Dendritic cell treated with granulocyte-macrophage colony-stimulating factor and Interleukin-4, amounts not matched to agents 40 ng/mL and 50 ng/mL, for 4 days (primary cell): ENCODE measurements at regions of chr4 and their contacts with region 1.

Region 1: DNA sequence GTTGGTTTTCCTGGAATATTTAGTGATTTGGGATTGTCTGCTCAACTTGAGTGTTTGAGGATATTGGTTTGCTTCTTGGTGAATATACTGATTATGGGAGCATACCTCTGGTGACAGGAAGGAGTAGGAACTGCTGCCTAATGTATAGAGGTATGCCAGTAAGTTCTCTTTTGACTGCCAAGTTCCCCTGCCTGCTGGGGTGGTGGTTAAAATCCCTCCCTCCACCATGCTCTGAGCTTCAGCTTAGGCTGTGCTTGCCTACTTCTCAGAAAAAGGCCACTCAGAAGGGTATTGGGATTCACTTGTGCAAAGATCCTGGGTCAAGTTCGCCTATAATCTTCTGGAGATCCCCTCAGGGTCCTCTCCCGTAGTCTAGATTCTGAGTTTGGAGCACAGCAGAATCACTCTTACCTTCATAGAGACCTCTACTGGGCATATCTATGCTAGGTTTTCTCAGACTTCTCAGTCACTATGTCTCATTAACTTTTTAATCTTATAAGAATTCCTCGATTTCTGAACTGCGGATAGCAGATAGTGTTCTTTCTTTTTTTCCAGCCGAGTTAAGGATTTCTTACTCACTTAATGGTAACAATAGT is 44.7 kb upstream of the DCK start:
- H3K4me3 Mint-ChIP-seq: peak overlapping the region; percentile 34
- H3K27ac Mint-ChIP-seq: peak overlapping the region; percentile 86
- H3K4me1 Mint-ChIP-seq: peaks cover 67% of the 10 kb centered on the region
- H3K27me3 Mint-ChIP-seq: no peaks in the 10 kb centered on the region

Region 2: DNA sequence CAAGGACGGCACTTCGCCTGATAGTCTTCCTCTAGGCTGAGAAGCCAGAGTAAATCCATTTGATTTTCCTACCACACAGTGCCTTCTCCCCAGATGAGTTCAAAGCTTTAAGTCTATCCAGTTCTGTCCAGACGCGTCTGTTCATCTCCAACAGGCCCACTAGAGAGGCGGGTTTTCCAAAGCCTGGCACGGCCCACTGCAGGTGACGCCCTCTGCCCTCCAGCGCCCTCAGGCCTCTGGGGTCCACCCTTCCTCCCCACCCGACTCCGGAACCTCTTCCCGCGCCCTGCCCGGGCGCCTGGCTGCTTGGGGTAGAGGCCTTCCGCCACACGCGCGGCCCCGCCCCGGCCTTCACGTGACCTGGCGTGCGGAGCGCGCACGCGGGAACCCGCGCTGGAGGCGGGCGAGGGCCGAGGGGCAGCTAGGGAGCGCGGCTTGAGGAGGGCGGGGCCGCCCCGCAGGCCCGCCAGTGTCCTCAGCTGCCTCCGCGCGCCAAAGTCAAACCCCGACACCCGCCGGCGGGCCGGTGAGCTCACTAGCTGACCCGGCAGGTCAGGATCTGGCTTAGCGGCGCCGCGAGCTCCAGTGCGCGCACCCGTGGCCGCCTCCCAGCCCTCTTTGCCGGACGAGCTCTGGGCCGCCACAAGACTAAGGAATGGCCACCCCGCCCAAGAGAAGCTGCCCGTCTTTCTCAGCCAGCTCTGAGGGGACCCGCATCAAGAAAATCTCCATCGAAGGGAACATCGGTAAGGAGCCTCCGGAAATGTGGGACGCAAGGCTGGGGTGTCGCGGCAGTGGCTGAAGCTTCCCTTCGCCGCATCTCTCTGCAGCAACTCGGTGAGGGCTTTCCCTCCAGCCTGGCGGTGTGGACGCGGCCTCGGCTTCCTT is 44.7 kb after region 1 on chr4 and contains the start of gene DCK:
- intact Hi-C with region 1: loop called (anchors 5 kb)
- H3K4me3 Mint-ChIP-seq: peak within 1 kb of the TSS; percentile 97
- H3K27ac Mint-ChIP-seq: peak within 1 kb of the TSS; percentile 90
- H3K4me1 Mint-ChIP-seq: peaks cover 34% of the 10 kb centered on the region
- H3K27me3 Mint-ChIP-seq: no peaks in the 10 kb centered on the region